ENCODE measurements at regions of chr6 and their contacts with region 1.

Region 1: GRCh38 chr6:54706844-54707605 is 139.5 kb upstream of the FAM83B start:
- DNase-seq: no peak

Region 2: DNA sequence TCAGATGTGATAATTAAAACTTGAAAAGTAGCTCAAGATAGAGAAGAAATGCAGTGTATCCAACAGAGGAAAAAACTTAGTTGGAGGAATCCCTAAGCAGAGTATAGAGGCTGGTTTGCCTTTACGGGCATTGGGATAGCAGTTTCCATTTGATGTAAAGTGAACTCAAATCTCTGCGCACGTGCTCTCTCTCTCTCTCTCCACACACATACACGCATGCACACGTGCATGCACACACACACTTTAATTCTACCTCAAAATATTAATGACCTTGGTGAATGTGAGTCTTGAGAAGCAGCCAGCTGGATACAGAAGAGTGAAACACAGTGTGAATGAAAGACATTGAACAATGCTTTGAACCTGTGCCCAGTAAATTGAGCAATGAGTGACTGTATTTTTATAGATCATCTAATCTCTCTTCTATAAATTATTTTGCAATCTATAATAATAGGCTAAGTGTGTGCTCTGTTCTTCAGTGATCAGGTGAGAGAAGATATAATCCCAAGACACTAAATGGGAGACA is 108.2 kb before region 1 on chr6:
- CTCF ChIA-PET with region 1: no interaction called
- POLR2A ChIA-PET with region 1: no interaction called
- DNase-seq: no peak

Region 3: GRCh38 chr6:54717849-54718455 is 10.9 kb after region 1 on chr6:
- CTCF ChIA-PET with region 1: interaction called, 14 read pairs
- POLR2A ChIA-PET with region 1: no interaction called
- DNase-seq: peak; percentile 47